GM10248 (cell line): ENCODE measurements at regions of chr2 and their contacts with region 1.

Region 1: GRCh38 chr2:16756831-16757644 is 91.4 kb upstream of the CYRIA start:
- DNase-seq: peak; percentile 74
- CTCF ChIP-seq: peak; percentile 87

Region 2: GRCh38 chr2:16608661-16609643 is 148.1 kb before region 1 on chr2:
- CTCF ChIA-PET with region 1: interaction called, 123 read pairs
- POLR2A ChIA-PET with region 1: no interaction called
- DNase-seq: peak; percentile 76
- CTCF ChIP-seq: peak; percentile 93

Region 3: DNA sequence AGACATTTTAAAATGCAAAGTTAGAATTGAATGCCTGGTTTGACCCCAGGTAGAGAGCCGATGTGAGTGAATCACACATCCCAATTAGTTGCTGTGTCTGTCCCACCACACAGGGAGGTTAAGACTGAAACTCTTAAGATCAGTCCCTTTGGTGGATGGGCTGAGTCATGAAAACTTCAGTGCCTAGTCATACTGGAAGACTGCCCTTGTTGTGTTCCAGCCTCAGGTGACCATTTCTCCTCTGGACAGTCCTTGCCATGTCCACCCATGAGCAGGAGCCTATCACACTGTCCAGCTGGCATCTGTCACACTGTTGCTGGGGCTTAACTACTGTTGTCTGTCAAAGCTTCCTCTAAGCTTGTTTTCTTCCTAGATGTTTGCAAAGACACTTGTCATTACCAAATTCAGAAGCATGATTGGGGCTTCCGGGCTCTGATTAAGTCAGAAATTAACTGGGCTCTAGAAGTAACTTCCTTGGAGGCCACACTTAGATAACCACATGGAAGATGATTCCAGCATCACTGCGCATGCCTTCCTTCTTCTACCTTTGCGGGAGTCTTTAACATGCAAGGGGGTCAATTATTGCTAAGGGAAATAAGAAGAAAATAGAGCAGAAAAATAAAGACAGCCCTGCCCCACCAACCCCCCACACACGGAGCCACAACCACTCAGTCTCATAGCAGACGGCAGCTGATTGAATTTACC is 112.7 kb before region 1 on chr2:
- CTCF ChIA-PET with region 1: interaction called, 10 read pairs
- POLR2A ChIA-PET with region 1: no interaction called
- DNase-seq: no peak
- CTCF ChIP-seq: no peak

Region 4: GRCh38 chr2:16658076-16658743 is 98.8 kb before region 1 on chr2:
- CTCF ChIA-PET with region 1: interaction called, 14 read pairs
- POLR2A ChIA-PET with region 1: no interaction called
- DNase-seq: no peak
- CTCF ChIP-seq: no peak

Region 5: GRCh38 chr2:16745466-16745865 is 11.6 kb before region 1 on chr2:
- CTCF ChIA-PET with region 1: interaction called, 33 read pairs
- POLR2A ChIA-PET with region 1: no interaction called
- DNase-seq: no peak
- CTCF ChIP-seq: no peak

Region 6: GRCh38 chr2:16791496-16791895 is 34.5 kb after region 1 on chr2:
- CTCF ChIA-PET with region 1: no interaction called
- POLR2A ChIA-PET with region 1: no interaction called
- DNase-seq: no peak
- CTCF ChIP-seq: no peak